ENCODE measurements at regions of chr10 and their contacts with region 1.

Region 1: GRCh38 chr10:7872041-7872442 is 53.7 kb downstream of the TAF3 start:
- DNase-seq: no peak
- H3K4me3 ChIP-seq: peak overlapping the region in 1 of 3 donors; percentile 13
- H3K27ac ChIP-seq: no peak overlapping the region
- H3K4me1 ChIP-seq: no peaks in the 10 kb centered on the region
- H3K27me3 ChIP-seq: no peaks in the 10 kb centered on the region
- CTCF ChIP-seq: peak; percentile 7 to 97 (median 68)
- POLR2A ChIP-seq: no peak

Region 2: GRCh38 chr10:8873310-8873709 is 1001.3 kb after region 1 on chr10:
- intact Hi-C with region 1: loop called (anchors 10 kb)
- DNase-seq: no peak
- H3K4me3 ChIP-seq: no peak overlapping the region
- H3K27ac ChIP-seq: no peak overlapping the region
- H3K4me1 ChIP-seq: no peaks in the 10 kb centered on the region
- H3K27me3 ChIP-seq: no peaks in the 10 kb centered on the region
- CTCF ChIP-seq: peak in 5 of 6 experiments; percentile 22 to 71 (median 54)
- POLR2A ChIP-seq: no peak

Region 3: DNA sequence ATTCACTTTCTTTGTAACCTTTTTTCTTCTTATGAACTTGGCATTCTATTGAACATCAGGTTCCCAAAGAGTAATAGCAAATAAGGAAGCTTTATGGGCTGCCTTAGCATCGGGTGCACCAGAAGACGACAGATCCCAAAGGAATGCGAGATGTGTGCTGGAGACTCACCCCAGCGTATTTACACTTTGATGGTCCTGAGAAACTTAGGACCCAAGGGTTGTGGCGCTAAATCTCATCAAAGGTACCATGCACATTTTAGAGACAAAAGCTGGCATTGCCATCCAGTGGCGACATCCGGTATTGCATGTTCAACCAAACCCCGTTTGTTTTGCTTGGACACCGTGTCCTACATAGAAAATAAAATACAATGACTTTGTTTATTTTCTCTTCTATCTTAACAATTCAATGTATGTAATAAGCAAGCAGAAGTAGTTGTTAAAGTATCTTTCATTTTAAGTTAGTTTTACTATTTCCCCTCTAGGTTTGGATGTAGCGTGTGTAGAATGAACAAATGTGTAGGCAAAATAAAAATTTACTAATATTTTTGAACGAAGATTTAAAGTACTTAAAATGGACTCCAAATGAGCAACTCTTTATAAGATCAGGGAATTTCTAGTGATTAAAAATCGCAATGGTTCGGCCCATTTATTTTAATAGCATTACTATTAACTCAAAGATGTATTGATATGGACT is 1337.2 kb after region 1 on chr10:
- intact Hi-C with region 1: loop called (anchors 5 kb)
- DNase-seq: peak; percentile 60 to 71
- H3K4me3 ChIP-seq: no peak overlapping the region
- H3K27ac ChIP-seq: no peak overlapping the region
- H3K4me1 ChIP-seq: no peaks in the 10 kb centered on the region
- H3K27me3 ChIP-seq: no peaks in the 10 kb centered on the region
- CTCF ChIP-seq: peak; percentile 77 to 88 (median 78)
- POLR2A ChIP-seq: no peak

Region 4: DNA sequence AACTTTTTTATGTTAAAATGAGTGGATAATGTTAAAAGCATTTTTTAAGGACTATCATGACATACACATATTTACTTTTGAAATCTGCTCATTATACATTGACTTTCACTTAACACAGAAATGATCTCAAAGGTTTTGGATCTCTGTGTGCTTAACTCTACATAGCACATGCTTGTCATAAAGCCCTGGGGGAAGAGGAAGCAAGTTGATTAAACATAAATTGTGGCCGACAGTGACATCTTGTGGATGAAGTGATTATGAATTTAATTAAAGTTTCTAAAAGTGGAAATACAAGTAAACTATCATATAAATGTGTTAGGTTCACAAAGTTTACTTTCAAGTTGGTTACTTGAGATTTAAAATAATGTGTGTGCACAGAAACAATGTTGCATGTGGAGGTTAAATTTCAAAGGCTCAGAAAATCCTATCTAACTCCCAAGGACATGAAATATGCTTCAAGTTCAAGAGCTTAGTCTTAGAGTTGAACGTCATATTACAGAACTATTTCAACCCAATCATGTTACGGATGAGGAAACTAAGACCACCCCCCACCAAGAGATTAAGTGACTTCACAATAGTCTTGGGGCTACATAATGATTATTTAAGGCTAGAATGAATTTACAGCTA is 1430.2 kb after region 1 on chr10:
- intact Hi-C with region 1: loop called (anchors 5 kb)
- DNase-seq: no peak
- H3K4me3 ChIP-seq: no peak overlapping the region
- H3K27ac ChIP-seq: no peak overlapping the region
- H3K4me1 ChIP-seq: no peaks in the 10 kb centered on the region
- H3K27me3 ChIP-seq: no peaks in the 10 kb centered on the region
- CTCF ChIP-seq: peak in 5 of 6 experiments; percentile 20 to 67 (median 48)
- POLR2A ChIP-seq: no peak

Measured in thyroid gland (tissue), 4 donors.